ENCODE measurements at regions of chr14 and their contacts with region 1.

Region 1: GRCh38 chr14:77554207-77554606 is 55.6 kb upstream of the ISM2 start:
- DNase-seq: no peak
- ATAC-seq: no peak
- H3K4me3 ChIP-seq: no peak overlapping the region
- H3K27ac ChIP-seq: no peak overlapping the region
- H3K4me1 ChIP-seq: no peaks in the 10 kb centered on the region
- H3K27me3 ChIP-seq: no peaks in the 10 kb centered on the region
- CTCF ChIP-seq: no peak
- POLR2A ChIP-seq: no peak
- RAD21 ChIP-seq: no peak

Region 2: DNA sequence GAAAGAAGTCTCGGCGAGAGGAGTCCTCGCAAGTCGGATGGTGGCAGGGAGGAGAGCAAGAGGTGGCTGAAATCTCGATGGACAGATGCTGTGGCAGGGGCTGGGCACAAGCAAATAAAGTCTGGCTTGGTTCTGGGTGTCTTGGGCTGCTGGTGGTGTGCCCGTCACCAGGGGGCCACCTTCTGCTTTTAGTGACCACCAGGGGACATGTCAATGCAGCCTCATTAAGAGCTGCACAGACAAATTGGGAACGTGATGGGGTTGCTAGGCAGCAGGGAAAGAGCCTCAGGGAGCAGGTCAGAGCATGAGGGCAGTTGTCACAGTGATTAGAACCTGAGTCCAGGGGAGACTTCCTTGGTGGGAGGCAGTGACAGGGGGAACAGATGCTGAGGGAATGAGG is 684.0 kb before region 1 on chr14:
- CTCF ChIA-PET with region 1: no interaction called
- POLR2A ChIA-PET with region 1: no interaction called
- RAD21 ChIA-PET with region 1: no interaction called
- intact Hi-C with region 1: loop called (anchors 2 kb)
- DNase-seq: no peak
- ATAC-seq: peak; percentile 74
- H3K4me3 ChIP-seq: no peak overlapping the region
- H3K27ac ChIP-seq: no peak overlapping the region
- H3K4me1 ChIP-seq: no peaks in the 10 kb centered on the region
- H3K27me3 ChIP-seq: no peaks in the 10 kb centered on the region
- CTCF ChIP-seq: peak; percentile 47 to 61 (median 49); a peak in 5 of 6 replicates
- POLR2A ChIP-seq: no peak
- RAD21 ChIP-seq: peak; percentile 39; the same call in 1 of the 2 replicates

Region 3: DNA sequence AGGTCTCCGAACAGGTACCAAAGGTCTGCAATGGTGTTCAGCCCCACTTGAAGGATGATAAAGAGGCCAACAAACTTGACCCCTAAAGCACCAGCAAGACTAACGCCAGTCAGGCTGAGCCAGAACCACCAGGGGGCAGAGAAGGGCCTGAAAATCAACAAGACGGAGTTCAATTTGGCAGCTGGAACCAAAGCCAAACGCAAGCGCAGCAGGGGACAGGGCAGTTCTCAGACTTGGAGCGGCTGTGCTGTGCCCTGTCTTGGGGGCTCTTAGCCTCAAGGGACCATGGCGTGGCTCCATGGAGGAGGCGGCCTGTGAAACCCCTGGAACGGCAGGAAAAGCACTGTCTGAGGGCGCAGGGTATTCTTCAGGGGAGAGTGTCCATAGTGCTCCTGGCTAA is 253.1 kb before region 1 on chr14:
- CTCF ChIA-PET with region 1: no interaction called
- POLR2A ChIA-PET with region 1: no interaction called
- RAD21 ChIA-PET with region 1: no interaction called
- intact Hi-C with region 1: loop called (anchors 2 kb)
- DNase-seq: peak; percentile 68
- ATAC-seq: peak; percentile 69
- H3K4me3 ChIP-seq: no peak overlapping the region
- H3K27ac ChIP-seq: no peak overlapping the region
- H3K4me1 ChIP-seq: peaks cover 19 to 22% of the 10 kb centered on the region in 2 experiments
- H3K27me3 ChIP-seq: no peaks in the 10 kb centered on the region
- CTCF ChIP-seq: peak; percentile 87 to 92 (median 89)
- POLR2A ChIP-seq: no peak
- RAD21 ChIP-seq: peak; percentile 82

Region 4: DNA sequence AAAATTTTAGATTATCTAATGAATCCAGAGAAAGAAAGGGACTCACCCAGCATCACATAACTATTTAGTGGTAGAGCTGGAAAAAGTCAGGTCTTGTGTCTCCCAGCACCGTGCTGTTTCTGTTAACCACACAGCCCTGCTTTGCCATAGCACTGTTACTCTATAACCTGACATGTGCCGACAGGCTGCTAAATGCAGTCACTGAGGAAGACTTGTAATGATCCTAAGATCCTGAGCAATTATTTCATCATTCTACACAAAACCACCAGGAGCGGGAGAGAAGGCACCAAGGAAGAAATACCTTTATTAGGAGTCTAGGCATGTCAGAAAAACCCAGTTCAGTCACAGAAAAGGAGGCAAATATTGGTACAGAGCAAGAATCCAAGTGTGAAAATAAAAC is 127.8 kb before region 1 on chr14:
- CTCF ChIA-PET with region 1: no interaction called
- POLR2A ChIA-PET with region 1: no interaction called
- RAD21 ChIA-PET with region 1: no interaction called
- intact Hi-C with region 1: no loop called
- DNase-seq: no peak
- ATAC-seq: no peak
- H3K4me3 ChIP-seq: no peak overlapping the region
- H3K27ac ChIP-seq: no peak overlapping the region
- H3K4me1 ChIP-seq: no peaks in the 10 kb centered on the region
- H3K27me3 ChIP-seq: no peaks in the 10 kb centered on the region
- CTCF ChIP-seq: no peak
- POLR2A ChIP-seq: no peak
- RAD21 ChIP-seq: no peak

Region 5: DNA sequence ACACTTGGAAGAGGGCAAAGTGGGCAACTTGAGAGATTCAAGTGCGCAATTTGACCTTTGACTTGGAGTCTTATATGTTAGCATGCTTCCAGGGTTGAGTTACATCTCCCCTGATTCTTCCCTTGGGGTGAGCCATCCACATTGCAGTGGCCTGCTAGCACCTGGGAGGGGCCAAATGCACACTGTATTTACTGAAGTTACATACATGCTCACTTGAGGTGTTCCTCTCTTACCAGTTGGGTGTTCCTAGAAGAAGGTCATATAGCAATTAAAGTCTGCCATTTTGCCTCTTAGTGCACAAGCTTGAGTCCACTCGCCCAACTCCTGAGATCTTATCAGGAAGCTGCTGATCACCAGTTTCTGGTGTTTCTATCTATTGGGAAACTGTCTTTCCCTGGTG is 75.9 kb after region 1 on chr14:
- CTCF ChIA-PET with region 1: no interaction called
- POLR2A ChIA-PET with region 1: no interaction called
- RAD21 ChIA-PET with region 1: no interaction called
- intact Hi-C with region 1: no loop called
- DNase-seq: no peak
- ATAC-seq: no peak
- H3K4me3 ChIP-seq: no peak overlapping the region
- H3K27ac ChIP-seq: no peak overlapping the region
- H3K4me1 ChIP-seq: no peaks in the 10 kb centered on the region
- H3K27me3 ChIP-seq: no peaks in the 10 kb centered on the region
- CTCF ChIP-seq: no peak
- POLR2A ChIP-seq: no peak
- RAD21 ChIP-seq: no peak

Measured in HCT116 (cell line).